ENCODE measurements at regions of chr17 and their contacts with region 1.

Region 1: DNA sequence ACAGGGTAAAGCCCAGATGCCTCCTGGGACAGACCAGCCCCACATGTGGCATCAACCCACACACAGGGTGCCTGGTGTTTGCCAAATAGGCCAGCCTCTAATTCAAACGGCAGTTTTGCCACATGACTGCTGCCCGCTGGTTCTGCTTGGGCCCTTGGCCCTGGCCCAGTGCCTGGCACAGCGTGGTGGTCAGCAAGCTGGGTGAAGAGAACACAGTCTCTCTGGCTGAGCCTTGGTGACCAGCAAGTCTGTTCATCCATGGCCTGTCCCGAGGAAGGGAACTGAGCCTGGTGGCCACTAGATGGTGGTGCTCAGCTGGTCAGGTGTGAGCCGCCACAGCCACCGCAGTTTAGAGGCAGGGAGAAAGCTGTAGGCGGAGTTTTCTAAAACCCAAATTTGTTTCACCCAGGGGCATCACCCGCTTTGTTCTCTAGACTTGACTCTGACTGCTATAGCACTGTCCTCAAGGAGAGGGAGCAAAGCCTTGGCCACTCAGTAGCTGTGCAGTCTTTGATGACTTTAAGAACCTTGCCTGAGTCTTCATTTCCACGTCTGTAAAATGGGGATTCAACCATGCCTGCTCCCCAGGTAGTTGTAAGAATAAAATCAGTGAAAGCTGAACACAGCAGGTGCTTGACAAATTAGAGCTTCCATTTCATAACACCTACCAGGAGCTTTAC is 4.7 kb upstream of the GFAP start:
- DNase-seq: no peak
- H3K4me3 ChIP-seq: no peak overlapping the region
- H3K27me3 ChIP-seq: no peaks in the 10 kb centered on the region
- CTCF ChIP-seq: peak; percentile 85

Region 2: GRCh38 chr17:44722254-44722653 is 197.8 kb before region 1 on chr17:
- CTCF ChIA-PET with region 1: no interaction called
- POLR2A ChIA-PET with region 1: no interaction called
- DNase-seq: no peak
- H3K4me3 ChIP-seq: no peak overlapping the region
- H3K27me3 ChIP-seq: no peaks in the 10 kb centered on the region
- CTCF ChIP-seq: no peak

Region 3: GRCh38 chr17:44779211-44780025 is 140.6 kb before region 1 on chr17:
- CTCF ChIA-PET with region 1: no interaction called
- POLR2A ChIA-PET with region 1: no interaction called
- DNase-seq: no peak
- H3K4me3 ChIP-seq: peak overlapping the region; percentile 44
- H3K27me3 ChIP-seq: no peaks in the 10 kb centered on the region
- CTCF ChIP-seq: peak; percentile 86

Region 4: GRCh38 chr17:44820631-44821212 is 99.3 kb before region 1 on chr17:
- CTCF ChIA-PET with region 1: no interaction called
- POLR2A ChIA-PET with region 1: no interaction called
- DNase-seq: peak; percentile 84
- H3K4me3 ChIP-seq: no peak overlapping the region
- H3K27me3 ChIP-seq: no peaks in the 10 kb centered on the region
- CTCF ChIP-seq: no peak

Region 5: GRCh38 chr17:44899069-44899782 is 20.8 kb before region 1 on chr17 and contains the start of gene EFTUD2:
- CTCF ChIA-PET with region 1: interaction called, 21 read pairs
- POLR2A ChIA-PET with region 1: no interaction called
- DNase-seq: no peak
- H3K4me3 ChIP-seq: peak within 1 kb of the TSS; percentile 84
- H3K27me3 ChIP-seq: no peaks in the 10 kb centered on the region
- CTCF ChIP-seq: no peak
- polyA plus RNA-seq, gene EFTUD2: 72.0 and 121 TPM in 2 replicates

Region 6: GRCh38 chr17:44932496-44933097 is 12.6 kb after region 1 on chr17:
- CTCF ChIA-PET with region 1: interaction called, 29 read pairs
- POLR2A ChIA-PET with region 1: no interaction called
- DNase-seq: no peak
- H3K4me3 ChIP-seq: no peak overlapping the region
- H3K27me3 ChIP-seq: no peaks in the 10 kb centered on the region
- CTCF ChIP-seq: no peak

Region 7: GRCh38 chr17:44941712-44942331 is 21.8 kb after region 1 on chr17:
- CTCF ChIA-PET with region 1: interaction called, 30 read pairs
- POLR2A ChIA-PET with region 1: no interaction called
- DNase-seq: no peak
- H3K4me3 ChIP-seq: no peak overlapping the region
- H3K27me3 ChIP-seq: no peaks in the 10 kb centered on the region
- CTCF ChIP-seq: 0 out of 2 replicates have a peak, but pooled peaks have one; percentile 3

Region 8: DNA sequence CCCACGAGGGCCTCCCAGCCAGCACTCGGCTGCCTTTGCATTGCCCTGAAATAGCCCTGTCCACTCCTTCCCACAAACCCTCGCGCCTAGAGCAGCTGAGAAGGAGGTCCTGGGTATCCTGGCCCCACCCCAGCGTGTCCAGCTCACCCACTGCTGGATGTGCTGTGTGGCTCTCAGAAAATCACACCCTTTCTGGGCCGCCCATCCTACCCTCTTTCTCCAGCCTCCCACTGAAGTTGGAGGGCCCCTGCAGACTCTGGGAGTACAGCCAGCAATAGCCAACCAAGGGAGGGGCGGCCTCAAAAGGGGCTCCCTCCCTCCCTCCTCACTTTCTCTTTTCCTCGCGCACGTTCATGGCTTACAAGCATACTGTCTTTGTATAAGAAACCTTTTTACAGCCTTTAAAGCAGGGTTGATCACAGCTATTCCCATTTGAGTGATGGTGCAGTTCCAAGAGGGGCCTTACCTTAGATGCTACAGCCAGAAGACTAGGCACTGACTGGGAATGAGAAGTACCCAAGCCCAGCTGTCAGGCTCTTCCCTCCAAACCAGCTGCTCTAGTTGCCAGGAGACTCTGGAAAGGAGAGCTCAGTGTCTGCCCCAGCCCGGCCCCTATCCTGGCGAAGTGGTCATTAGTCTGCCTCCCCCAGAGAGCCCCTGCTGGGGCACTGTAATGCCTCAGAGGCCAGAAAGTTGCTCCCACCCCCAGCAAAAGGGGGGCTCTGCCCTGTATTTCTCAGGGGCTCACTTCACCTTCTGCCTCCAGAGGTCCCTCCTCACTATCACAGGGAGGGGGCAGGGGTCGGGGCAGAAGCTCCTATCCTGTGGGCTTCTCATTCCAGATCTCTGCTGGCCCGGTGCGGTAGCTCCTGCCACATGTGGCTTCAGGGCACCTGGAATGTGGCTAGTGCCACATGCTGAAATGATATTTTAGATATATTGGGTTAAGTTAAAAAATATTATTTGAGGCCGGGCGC is 93.3 kb after region 1 on chr17:
- CTCF ChIA-PET with region 1: interaction called, 259 read pairs
- POLR2A ChIA-PET with region 1: no interaction called
- DNase-seq: no peak
- H3K4me3 ChIP-seq: no peak overlapping the region
- H3K27me3 ChIP-seq: 0 out of 2 replicates have a peak, but pooled peaks cover 2% of the 10 kb centered on the region
- CTCF ChIP-seq: no peak

Region 9: GRCh38 chr17:45021607-45022287 is 101.7 kb after region 1 on chr17:
- CTCF ChIA-PET with region 1: interaction called, 259 read pairs
- POLR2A ChIA-PET with region 1: no interaction called
- DNase-seq: no peak
- H3K4me3 ChIP-seq: peak overlapping the region; percentile 26
- H3K27me3 ChIP-seq: no peaks in the 10 kb centered on the region
- CTCF ChIP-seq: peak; percentile 56

Region 10: GRCh38 chr17:45098869-45099616 is 179.0 kb after region 1 on chr17:
- CTCF ChIA-PET with region 1: interaction called, 51 read pairs
- POLR2A ChIA-PET with region 1: no interaction called
- DNase-seq: no peak
- H3K4me3 ChIP-seq: no peak overlapping the region
- H3K27me3 ChIP-seq: no peaks in the 10 kb centered on the region
- CTCF ChIP-seq: peak; percentile 91

Measured in BJ (cell line).